ENCODE measurements at regions of chr4 and their contacts with region 1.

Region 1: DNA sequence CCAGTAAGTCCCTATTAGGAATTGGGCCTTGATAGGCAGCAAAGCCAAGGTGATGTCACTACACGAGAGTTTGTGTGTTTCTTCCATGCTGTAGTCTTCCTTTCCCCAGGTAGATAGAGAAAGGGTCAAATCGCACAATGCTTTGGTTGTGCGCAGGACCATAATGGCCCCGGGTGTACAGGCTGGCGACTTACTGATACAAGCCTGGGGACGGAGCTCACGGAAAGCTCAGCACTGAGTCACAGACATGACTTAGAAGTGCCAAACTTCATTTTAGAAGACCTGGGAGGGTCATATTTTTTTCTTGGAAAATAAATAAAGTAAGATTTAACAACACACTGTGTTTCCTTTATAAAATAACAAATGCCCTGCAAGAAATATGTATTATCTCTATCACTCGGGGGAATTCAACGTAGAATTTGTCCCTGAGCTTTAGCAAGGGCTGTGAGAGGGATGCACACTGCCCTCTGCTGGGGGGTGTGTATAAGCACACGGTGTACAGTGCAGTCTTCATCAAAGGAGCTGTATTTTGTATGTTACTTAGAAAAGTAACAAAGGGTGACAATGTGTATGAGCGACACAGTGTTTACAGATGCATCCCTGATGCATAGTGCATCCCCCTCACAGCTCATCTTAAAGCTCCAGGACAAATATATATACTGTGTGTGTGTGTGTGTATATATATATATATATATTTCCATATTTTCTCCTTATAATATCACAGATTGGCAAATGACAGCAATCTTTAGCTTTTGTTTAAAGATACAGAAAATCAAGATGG is 254.5 kb upstream of the VEGFC start:
- DNase-seq: peak; percentile 58 to 82
- ATAC-seq: peak; percentile 71
- H3K4me3 ChIP-seq: no peak overlapping the region
- H3K27ac ChIP-seq: no peak overlapping the region
- H3K4me1 ChIP-seq: peaks cover 0 to 4% of the 10 kb centered on the region in 2 donors
- H3K27me3 ChIP-seq: peaks cover 0 to 2% of the 10 kb centered on the region in 2 donors

Region 2: GRCh38 chr4:176377780-176378179 is 669.5 kb before region 1 on chr4:
- intact Hi-C with region 1: loop called (anchors 5 to 10 kb)
- DNase-seq: no peak
- ATAC-seq: no peak
- H3K4me3 ChIP-seq: no peak overlapping the region
- H3K27ac ChIP-seq: no peak overlapping the region
- H3K4me1 ChIP-seq: no peaks in the 10 kb centered on the region
- H3K27me3 ChIP-seq: no peaks in the 10 kb centered on the region

Region 3: GRCh38 chr4:176789955-176790354 is 257.3 kb before region 1 on chr4:
- intact Hi-C with region 1: loop called in 1 of 2 experiments (anchors 5 kb)
- DNase-seq: no peak
- ATAC-seq: no peak
- H3K4me3 ChIP-seq: no peak overlapping the region
- H3K27ac ChIP-seq: no peak overlapping the region
- H3K4me1 ChIP-seq: no peaks in the 10 kb centered on the region
- H3K27me3 ChIP-seq: no peaks in the 10 kb centered on the region

Region 4: DNA sequence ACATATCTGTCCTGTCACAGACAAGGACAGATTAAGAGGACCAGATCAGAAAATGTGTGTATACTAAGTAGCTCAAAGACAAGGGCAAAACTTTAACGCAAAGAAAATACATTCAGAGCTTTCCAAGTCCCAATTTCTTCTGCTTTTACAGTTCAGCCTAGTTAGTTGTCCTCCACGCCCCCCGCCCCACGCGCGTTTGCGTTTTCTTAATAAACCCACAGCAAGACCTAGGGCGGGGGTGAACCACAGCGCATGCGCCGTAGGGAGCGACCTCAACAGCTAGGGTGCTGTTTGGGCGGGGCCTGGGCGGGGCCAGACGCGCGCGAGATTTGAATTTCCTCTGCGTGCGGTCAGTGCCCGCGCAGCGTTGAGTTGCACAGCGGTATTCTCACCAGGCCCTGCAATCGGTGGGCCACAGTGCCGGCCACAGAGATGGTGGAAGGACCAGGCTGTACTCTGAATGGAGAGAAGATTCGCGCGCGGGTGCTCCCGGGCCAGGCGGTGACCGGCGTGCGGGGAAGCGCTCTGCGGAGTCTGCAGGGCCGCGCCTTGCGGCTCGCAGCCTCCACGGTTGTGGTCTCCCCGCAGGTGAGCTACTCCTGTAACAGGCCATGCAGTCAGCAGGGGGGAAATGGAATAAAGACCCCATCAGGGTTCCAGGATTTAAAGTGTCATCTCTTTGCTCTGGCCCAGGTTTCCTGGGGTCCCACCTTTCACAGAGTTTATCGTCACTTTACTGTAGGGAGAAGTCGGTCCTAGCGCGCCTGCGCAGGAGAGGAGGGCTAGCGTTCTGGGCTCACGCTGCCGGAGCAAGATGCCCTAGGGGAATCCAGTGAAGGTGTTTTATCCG is 262.5 kb after region 1 on chr4 and contains the start of gene NEIL3:
- intact Hi-C with region 1: no loop called
- DNase-seq: peak; percentile 96 to 97
- ATAC-seq: peak; percentile 92
- H3K4me3 ChIP-seq: peak within 1 kb of the TSS; percentile 51 to 54
- H3K27ac ChIP-seq: no peak within 1 kb of the TSS
- H3K4me1 ChIP-seq: no peaks in the 10 kb centered on the region
- H3K27me3 ChIP-seq: no peaks in the 10 kb centered on the region
- total RNA-seq, gene NEIL3: 0.39 to 0.99 TPM

Measured in aorta (tissue), 5 donors.